ENCODE measurements at regions of chr12 and their contacts with region 1.

Region 1: DNA sequence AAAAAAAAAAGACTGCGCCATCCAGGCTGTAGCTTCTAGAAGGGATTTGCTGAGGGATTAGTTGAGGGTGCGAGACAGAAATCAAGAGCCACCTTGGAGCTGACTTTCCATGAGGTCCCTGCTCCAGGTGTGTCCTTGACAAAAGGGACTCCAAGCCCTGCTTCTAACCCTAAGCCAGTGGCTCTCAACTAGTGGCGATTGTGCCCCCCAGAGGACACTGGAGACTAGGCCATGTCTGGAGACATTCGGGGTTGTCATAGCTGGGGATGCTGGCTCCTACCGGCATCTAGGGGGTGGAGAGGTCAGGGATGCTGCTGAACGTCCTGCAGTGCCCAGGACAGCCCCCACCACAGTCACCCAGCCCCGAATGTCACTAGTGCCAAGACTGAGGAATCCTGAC is 40.6 kb downstream of the SPRING1 start:
- DNase-seq: no peak
- ATAC-seq: no peak

Region 2: GRCh38 chr12:116266168-116266601 is 431.1 kb before region 1 on chr12:
- intact Hi-C with region 1: loop called (anchors 10 kb)
- DNase-seq: no peak
- ATAC-seq: peak; percentile 23

Region 3: DNA sequence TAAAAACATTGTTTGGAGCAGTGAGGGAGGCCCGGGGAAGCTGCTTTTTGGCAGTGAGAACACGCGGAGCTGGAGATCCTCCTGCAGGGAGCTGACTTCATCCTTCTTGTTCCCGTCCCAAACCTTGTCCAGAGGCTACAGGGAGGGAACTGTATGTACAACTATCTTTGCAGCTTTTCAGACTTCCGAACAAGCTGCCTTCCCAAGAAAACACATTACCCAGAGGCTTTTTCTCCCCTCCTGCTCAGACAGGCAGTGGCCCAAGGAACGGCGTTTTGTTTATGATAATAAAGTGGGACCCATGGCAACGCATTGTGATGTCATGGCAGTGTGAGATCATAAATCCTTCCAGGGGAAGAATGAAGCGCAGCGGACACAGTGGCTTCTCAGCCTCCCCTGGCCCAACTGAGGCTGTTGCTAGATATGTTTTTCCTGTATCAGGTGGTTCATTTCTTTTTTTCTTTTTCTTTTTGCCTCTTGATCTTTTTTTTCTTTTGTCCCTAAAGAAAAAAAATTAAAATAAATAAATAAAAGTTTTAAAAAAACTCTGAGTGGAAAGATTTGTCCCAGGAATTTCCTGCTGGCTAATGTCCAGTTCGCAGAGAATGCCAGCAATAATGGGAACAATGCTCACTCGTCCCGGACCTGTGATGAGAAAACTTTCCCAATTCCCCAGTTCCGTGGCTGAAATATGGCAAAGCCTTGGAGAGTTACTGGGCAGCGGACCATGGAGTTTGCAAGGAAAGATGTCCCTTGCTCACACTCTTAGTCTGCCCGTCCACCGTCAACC is 241.6 kb before region 1 on chr12:
- intact Hi-C with region 1: loop called (anchors 10 kb)
- DNase-seq: peak; percentile 84
- ATAC-seq: peak; percentile 94

Region 4: DNA sequence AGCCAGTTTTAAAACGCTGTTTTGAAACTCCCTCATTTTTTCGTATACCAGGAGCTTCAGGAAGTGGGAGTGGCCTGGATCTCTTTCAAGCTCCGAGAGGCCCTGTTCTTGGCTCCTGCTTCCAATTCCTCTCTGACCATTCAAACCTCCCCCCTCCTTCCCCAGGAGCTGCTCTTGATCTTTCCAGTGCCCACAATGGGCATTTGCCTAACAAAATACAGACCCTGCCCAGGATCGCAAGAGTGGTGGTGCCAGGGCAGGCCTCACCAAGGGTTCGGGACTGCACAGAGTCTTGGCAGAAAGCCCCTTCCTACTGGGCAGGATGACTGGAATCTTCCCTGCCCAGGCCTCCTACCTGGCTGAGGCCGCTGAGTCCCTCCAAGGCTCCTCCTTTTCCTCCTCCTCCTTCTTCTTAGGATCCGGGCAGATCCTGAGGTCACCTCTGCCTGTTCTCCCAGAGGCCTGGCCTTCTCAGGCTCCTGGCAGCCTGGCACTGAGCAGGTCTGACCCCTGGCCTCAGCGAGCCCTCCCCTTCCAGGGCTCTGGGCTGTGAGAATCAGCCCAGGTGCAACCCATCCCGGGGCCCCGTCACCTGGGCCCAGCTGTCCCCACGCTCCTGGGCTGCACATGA is 711.0 kb after region 1 on chr12:
- intact Hi-C with region 1: no loop called
- DNase-seq: no peak
- ATAC-seq: peak; percentile 58

Measured in Right ventricle myocardium inferior (tissue), 1 donor.